Heart left ventricle (tissue), 16 donors: ENCODE measurements at regions of chr12 and their contacts with region 1.

Region 1: DNA sequence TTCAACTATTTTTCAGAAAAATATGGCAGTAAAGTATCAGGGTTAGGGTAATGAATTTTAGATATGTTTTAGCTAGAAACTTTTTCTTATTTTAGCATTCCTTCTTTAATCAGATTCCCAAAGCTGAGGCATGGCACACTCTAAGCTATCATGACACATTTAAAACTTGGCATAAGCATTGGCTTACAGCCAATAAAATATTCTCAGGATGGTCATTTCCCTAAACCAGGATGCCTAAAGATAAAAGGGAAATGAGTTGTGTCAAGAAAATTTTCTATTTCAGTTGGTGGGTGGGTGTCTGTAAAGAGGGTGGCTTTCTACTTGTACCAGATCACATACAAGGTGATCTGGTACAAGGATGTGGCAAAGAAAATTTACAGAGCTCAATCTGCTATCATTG is 47.8 kb downstream of the PEBP1 start:
- DNase-seq: no peak
- ATAC-seq: no peak
- H3K4me3 ChIP-seq: no peak overlapping the region
- H3K27ac ChIP-seq: peak overlapping the region in 5 of 12 donors; percentile 6 to 25 (median 22)
- H3K4me1 ChIP-seq: peaks cover 0 to 40% (median 28%) of the 10 kb centered on the region in 12 donors
- H3K27me3 ChIP-seq: no peaks in the 10 kb centered on the region
- CTCF ChIP-seq: no peak
- POLR2A ChIP-seq: no peak

Region 2: GRCh38 chr12:118120579-118121363 is 62.9 kb before region 1 on chr12:
- intact Hi-C with region 1: loop called in 1 of 10 experiments (anchors 5 kb)
- DNase-seq: peak; percentile 69 to 79 (median 72)
- ATAC-seq: peak; percentile 78 to 93 (median 86)
- H3K4me3 ChIP-seq: no peak overlapping the region
- H3K27ac ChIP-seq: peak overlapping the region in 10 of 12 donors; percentile 35 to 78 (median 62)
- H3K4me1 ChIP-seq: peaks cover 0 to 11% (median 6%) of the 10 kb centered on the region in 12 donors
- H3K27me3 ChIP-seq: no peaks in the 10 kb centered on the region
- CTCF ChIP-seq: peak; percentile 62 to 89 (median 79)
- POLR2A ChIP-seq: no peak

Region 3: GRCh38 chr12:118135788-118136558 is 47.7 kb before region 1 on chr12 and contains the start of gene PEBP1:
- intact Hi-C with region 1: loop called in 1 of 10 experiments (anchors 5 kb)
- DNase-seq: peak; percentile 94 to 98 (median 96)
- ATAC-seq: peak; percentile 95 to 99 (median 99)
- H3K4me3 ChIP-seq: peak within 1 kb of the TSS; percentile 69 to 98 (median 87)
- H3K27ac ChIP-seq: peak within 1 kb of the TSS; percentile 63 to 92 (median 86)
- H3K4me1 ChIP-seq: peaks cover 0 to 36% (median 16%) of the 10 kb centered on the region in 12 donors
- H3K27me3 ChIP-seq: no peaks in the 10 kb centered on the region
- CTCF ChIP-seq: peak in 1 of 12 donors; percentile 25
- POLR2A ChIP-seq: peak in 1 of 2 donors; percentile 87
- total RNA-seq, gene PEBP1: 301 to 751 (median 420) TPM